ENCODE measurements at regions of chr5 and their contacts with region 1.

Region 1: DNA sequence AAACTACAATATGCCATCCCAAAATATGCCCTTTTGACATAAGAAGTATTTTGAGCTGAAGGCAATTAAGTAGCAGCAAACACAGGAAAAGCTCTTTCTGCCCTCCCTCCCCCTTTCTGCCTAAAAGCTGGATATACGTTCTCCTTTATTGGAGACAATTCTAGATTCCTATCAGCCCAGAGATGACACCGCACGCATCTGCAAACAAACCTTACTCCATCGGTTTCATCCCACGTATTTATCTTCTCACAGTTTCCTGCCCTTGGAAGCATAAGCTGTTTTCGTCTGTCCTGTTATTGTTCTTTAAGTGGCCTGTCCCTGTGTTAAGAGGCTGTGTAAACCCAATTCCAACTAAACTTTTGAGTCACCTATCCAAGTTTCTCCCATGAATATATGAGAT is 11.9 kb downstream of the TBC1D9B start:
- DNase-seq: no peak
- H3K4me3 ChIP-seq: no peak overlapping the region
- CTCF ChIP-seq: no peak

Region 2: DNA sequence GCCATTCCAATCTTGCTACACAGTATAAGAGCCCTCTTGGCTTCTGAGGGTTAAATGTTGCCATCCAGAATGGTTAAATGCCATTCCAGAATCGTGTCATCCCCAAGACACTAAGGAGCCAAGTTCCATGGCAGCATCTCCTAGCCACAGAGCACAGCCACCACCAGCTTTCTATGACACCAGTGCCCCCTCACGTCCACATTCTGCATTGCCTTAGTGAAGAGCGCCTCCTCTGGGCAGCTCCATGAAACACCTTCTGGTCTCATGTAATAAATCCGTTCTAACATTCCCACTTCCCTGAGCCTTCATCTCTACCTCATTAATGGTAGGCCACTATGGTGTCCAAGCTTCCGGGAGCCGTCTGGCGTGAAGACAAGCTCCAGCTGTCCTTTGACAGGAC is 227.5 kb before region 1 on chr5:
- CTCF ChIA-PET with region 1: no interaction called
- POLR2A ChIA-PET with region 1: no interaction called
- DNase-seq: no peak
- H3K4me3 ChIP-seq: no peak overlapping the region
- CTCF ChIP-seq: peak; percentile 78

Region 3: GRCh38 chr5:179907570-179908324 is 11.9 kb after region 1 on chr5 and contains the start of gene TBC1D9B:
- CTCF ChIA-PET with region 1: interaction called, 14 read pairs
- POLR2A ChIA-PET with region 1: interaction called, 3 read pairs
- DNase-seq: no peak
- H3K4me3 ChIP-seq: peak within 1 kb of the TSS; percentile 83
- CTCF ChIP-seq: peak; percentile 24